Natural killer cell (primary cell): ENCODE measurements at regions of chr1 and their contacts with region 1.

Region 1: DNA sequence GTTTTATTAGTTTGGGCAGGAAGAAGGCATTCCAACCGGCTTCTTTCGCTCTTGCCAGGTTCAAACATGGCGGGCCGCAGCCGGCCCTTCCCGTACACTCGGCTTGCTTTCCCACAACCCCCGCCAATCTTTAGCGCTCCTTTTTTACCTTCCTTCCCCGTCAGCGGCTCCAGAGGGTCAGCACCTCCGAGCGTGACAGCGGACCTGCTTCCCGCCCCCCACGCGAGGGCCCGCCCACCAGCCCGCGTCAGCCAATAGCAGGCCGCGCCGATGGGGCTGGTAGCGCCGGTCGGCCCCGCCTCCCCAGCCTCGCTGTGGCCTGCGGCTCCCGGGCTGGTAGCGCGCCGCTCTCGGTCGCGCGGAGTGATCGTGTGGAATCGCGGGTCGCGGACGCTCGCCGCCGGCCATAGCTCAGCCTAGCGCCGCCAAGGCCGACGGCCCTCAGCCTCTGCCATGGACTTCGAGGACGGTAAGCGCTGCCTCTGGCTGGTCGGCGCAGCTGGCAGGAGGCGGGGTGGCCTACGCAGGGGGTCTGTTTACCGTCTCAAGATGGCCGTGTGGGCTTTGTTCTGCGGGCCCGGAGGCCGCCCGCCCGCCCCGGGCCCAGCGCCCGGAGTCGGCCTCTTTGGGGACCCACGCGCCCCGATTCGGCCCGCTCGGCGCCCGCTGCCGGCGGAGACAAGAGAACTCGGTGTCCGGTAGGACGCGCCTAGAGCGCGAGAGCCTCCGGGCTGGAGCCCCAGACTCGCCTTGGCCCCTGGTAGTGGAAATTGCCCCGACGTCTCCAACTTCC is at the start of gene ZNF326:
- DNase-seq: peak; percentile 95 to 97
- ATAC-seq: peak; percentile 95 to 99 (median 97)
- H3K4me3 ChIP-seq: peak within 1 kb of the TSS; percentile 84
- H3K4me3 Mint-ChIP-seq: peak within 1 kb of the TSS; percentile 97
- H3K27ac ChIP-seq: peak within 1 kb of the TSS; percentile 92
- H3K27ac Mint-ChIP-seq: peak within 1 kb of the TSS; percentile 89 to 92
- H3K4me1 ChIP-seq: peaks cover 12% of the 10 kb centered on the region
- H3K4me1 Mint-ChIP-seq: peaks cover 31 to 47% of the 10 kb centered on the region in 2 donors
- H3K27me3 ChIP-seq: no peaks in the 10 kb centered on the region
- H3K27me3 Mint-ChIP-seq: no peaks in the 10 kb centered on the region
- CTCF ChIP-seq: no peak
- total RNA-seq, gene ZNF326: 44.4 to 49.2 (median 45.7) TPM

Region 2: GRCh38 chr1:89633800-89634625 is 361.0 kb before region 1 on chr1:
- intact Hi-C with region 1: no loop called
- DNase-seq: peak in 1 of 2 donors; percentile 53
- ATAC-seq: no peak
- H3K4me3 ChIP-seq: peak overlapping the region; percentile 91
- H3K4me3 Mint-ChIP-seq: peak overlapping the region; percentile 91
- H3K27ac ChIP-seq: peak overlapping the region; percentile 78
- H3K27ac Mint-ChIP-seq: peak overlapping the region; percentile 78 to 99
- H3K4me1 ChIP-seq: peaks cover 19% of the 10 kb centered on the region
- H3K4me1 Mint-ChIP-seq: peaks cover 51 to 61% of the 10 kb centered on the region in 2 donors
- H3K27me3 ChIP-seq: no peaks in the 10 kb centered on the region
- H3K27me3 Mint-ChIP-seq: no peaks in the 10 kb centered on the region
- CTCF ChIP-seq: no peak

Region 3: DNA sequence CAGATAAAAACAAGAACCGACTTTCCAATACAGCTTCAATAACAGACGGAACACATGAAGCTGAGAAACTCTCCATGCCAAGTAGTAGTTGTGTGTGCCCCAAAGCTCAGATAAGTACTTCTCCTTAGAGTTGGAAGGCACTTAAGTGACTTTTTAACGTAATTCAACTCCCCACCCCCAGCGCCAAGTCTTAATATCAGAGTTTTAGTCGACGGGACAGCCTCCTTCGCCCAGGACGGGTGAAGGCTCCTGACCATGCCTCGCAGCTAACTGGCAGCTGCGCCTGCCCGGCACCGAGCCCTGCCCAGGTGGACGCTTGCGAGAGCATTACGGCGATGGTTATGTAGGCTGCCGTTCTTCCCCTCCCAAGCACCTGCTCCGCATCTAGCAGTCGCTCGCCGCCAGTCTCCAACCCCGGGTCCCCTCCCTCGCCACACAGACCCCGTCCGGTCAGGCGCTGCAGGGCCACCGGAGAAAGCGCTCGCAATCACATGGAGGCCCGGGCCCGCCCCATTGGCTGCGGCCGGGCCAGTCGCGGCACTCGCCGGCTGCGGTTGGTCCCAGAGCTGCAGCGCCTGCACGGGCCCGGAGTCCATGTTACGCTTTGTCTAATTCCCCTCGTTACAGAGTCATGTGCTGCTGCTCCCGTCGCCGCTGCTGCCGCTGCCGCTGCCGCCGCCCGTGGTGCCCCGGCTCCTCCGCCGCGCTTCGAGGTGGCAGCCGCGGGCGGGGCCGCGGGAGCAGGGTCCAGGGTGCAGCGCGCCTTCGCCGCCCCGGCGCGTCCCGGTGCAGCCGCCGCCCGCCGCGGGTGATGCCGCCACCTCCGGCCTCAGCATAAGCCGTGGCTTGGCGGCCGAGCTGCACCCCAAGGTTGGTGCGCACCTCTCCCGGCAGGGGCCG is 174.3 kb before region 1 on chr1 and contains the start of gene LRRC8D:
- intact Hi-C with region 1: loop called (anchors 5 kb)
- DNase-seq: peak; percentile 70 to 79
- ATAC-seq: peak; percentile 80 to 85 (median 83)
- H3K4me3 ChIP-seq: peak within 1 kb of the TSS; percentile 85
- H3K4me3 Mint-ChIP-seq: peak within 1 kb of the TSS; percentile 95
- H3K27ac ChIP-seq: peak within 1 kb of the TSS; percentile 63
- H3K27ac Mint-ChIP-seq: peak within 1 kb of the TSS; percentile 80 to 89
- H3K4me1 ChIP-seq: peaks cover 23% of the 10 kb centered on the region
- H3K4me1 Mint-ChIP-seq: peaks cover 27 to 34% of the 10 kb centered on the region in 2 donors
- H3K27me3 ChIP-seq: peaks cover 2% of the 10 kb centered on the region
- H3K27me3 Mint-ChIP-seq: peaks cover 5 to 6% of the 10 kb centered on the region in 2 donors
- CTCF ChIP-seq: no peak
- total RNA-seq, gene LRRC8D: 16.2 to 26.2 (median 17.1) TPM